Activated CD4-positive, alpha-beta T cell treated with anti-CD3 and anti-CD28 coated beads, Interleukin-2, amount 10 ng/mL, durations not matched to agents 24 days and 14 days (primary cell): ENCODE measurements at regions of chr12 and their contacts with region 1.

Region 1: DNA sequence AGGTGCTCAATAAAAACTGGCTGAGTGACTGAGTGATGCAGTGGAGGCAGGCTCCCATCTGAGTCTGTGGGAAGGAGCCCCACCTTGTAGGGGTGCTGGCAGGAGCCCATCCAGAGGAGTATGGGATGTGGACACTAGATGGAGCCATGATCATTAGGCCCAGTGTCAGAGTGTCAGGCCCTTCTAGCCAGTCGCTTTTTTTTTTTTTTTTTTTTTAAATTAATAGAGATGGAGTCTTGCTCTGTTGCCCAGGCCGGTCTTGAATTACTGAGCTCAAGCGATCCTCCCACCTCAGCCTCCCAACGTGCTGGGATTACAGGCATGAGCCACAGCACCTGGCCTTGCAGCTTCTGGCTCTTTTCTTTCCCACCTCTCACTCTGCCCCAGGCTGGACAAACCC is 11.5 kb downstream of the RITA1 start:
- DNase-seq: peak; percentile 90
- H3K4me3 Mint-ChIP-seq: no peak overlapping the region
- H3K27ac Mint-ChIP-seq: no peak overlapping the region
- H3K4me1 Mint-ChIP-seq: peaks cover 15% of the 10 kb centered on the region
- H3K27me3 Mint-ChIP-seq: no peaks in the 10 kb centered on the region

Region 2: GRCh38 chr12:113232840-113233585 is 36.0 kb after region 1 on chr12:
- intact Hi-C with region 1: loop called (anchors 1 kb)
- DNase-seq: peak; percentile 87
- H3K4me3 Mint-ChIP-seq: peak overlapping the region; percentile 81
- H3K27ac Mint-ChIP-seq: peak overlapping the region; percentile 86
- H3K4me1 Mint-ChIP-seq: peaks cover 51% of the 10 kb centered on the region
- H3K27me3 Mint-ChIP-seq: no peaks in the 10 kb centered on the region

Region 3: DNA sequence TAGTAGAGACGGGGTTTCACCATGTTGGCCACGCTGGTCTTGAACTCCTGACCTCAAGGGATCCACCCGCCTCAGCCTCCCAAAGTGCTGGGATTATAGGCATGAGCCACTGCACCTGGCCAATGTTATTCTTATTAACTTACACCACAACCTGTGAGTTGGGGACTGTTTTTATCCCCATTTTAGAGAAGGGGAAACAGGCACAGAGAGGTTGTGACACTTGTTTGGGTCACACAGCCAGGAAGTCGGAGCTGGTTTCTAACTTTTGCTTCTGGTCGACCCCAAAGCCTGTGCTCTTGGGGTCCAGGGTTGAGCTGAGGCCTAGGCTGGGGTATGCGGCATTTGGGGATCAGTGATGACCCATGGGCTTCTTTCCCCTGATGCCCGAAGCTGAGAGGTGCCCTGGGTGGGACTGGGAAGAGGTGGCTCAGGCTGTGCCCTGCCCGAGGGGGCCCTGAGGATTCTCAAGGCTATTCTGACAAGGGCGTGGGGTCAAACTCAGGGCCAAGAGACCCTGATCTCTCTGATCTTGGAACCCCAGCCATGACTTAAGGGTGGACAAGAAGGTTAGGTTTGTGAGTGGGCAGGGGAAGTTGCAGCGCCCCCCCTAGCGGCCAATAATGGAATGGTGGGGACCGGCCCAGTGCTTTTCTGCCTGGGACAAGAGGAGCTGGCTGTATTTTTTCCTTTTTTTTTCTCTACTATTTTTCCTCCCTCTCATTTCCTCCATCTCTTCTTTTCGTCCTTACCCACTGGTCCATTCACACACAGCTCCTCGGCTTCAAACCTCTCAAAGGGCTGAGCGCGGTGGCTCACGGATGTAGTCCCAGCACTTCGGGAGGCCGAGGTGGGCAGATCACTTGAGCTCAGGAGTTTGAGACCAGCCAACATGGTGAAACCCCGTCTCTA is 228.2 kb after region 1 on chr12:
- intact Hi-C with region 1: loop called (anchors 1 kb)
- DNase-seq: peak; percentile 86
- H3K4me3 Mint-ChIP-seq: no peak overlapping the region
- H3K27ac Mint-ChIP-seq: no peak overlapping the region
- H3K4me1 Mint-ChIP-seq: peaks cover 10% of the 10 kb centered on the region
- H3K27me3 Mint-ChIP-seq: peaks cover 9% of the 10 kb centered on the region

Region 4: DNA sequence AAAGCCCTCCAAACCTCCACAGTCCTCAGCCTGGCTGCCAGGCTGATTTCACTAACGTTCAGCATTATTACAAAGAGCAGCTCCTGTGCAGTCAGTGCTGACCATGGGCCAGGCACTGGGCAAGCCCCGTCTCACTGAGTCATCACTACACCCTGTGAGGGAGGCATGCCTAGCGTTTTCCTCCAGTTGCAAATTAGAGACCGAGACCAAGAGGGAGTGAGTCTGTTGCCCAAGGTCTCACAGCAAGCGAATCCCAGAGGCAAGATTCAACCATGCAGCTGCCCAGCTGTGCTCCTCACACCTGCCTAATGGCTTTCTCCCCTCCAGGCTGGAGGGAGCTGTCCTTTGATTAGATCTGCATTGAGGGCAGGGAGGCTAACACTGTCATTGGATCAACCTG is 503.9 kb after region 1 on chr12:
- intact Hi-C with region 1: no loop called
- DNase-seq: no peak
- H3K4me3 Mint-ChIP-seq: no peak overlapping the region
- H3K27ac Mint-ChIP-seq: no peak overlapping the region
- H3K4me1 Mint-ChIP-seq: no peaks in the 10 kb centered on the region
- H3K27me3 Mint-ChIP-seq: peaks cover 6% of the 10 kb centered on the region